Activated naive CD4-positive, alpha-beta T cell treated with anti-CD3 and anti-CD28 coated beads for 36 hours (primary cell): ENCODE measurements at regions of chr13 and their contacts with region 1.

Region 1: DNA sequence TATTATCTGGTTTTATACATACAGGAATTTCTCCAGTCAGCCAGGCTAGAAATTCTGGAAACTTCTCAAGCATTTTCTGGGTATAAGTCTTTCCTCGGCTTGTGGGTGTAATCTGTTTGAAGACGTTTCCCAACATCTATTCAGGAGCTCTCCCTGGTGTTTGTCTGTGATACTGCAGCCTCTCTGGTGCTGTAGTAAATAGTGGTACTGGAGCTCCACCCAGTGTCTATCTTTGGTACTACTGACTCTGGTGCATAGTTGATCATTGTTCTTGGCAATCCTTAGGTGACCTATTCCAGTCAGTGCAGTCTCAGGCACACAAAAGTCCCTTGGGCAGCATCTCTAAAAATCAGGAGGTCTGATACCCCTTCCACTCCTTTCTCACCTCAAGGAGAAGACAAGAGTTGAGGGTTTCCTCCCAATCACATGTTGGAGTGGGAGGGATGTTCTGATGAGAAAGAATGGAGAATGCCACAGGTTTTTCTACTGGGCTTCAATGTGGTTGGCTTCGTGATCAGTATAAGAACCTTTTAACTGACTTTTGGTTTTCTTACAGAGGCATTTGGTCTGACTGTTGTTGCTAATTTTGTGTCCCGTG is 115.5 kb downstream of the CYSLTR2 start:
- DNase-seq: peak; percentile 93
- H3K4me3 Mint-ChIP-seq: no peak overlapping the region
- H3K27ac Mint-ChIP-seq: no peak overlapping the region
- H3K4me1 Mint-ChIP-seq: peaks cover 15% of the 10 kb centered on the region
- H3K27me3 Mint-ChIP-seq: peaks cover 4% of the 10 kb centered on the region

Region 2: DNA sequence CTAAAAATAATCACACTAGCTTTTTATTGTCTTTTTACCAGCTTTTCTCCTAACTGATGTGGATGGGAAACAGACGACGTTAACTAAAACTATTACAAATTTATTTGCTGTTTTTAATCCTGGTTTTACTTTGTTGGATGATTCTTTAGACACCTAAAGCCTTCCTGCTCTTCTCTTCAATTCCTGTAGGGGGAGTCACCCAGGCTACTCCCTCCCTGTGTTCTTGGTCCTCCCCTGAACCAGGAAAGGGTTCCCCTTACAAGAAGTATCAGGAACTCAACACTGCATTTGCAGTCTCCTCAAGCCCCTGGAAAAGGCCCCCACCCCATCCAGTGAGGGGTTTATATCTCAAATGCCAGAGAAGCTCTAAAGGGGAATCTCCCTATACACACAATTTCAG is 974.2 kb before region 1 on chr13:
- CTCF ChIA-PET with region 1: no interaction called
- intact Hi-C with region 1: loop called (anchors 10 kb)
- DNase-seq: no peak
- H3K4me3 Mint-ChIP-seq: no peak overlapping the region
- H3K27ac Mint-ChIP-seq: no peak overlapping the region
- H3K4me1 Mint-ChIP-seq: no peaks in the 10 kb centered on the region
- H3K27me3 Mint-ChIP-seq: no peaks in the 10 kb centered on the region

Region 3: GRCh38 chr13:48126944-48127830 is 642.0 kb before region 1 on chr13:
- CTCF ChIA-PET with region 1: interaction called, 4 read pairs
- intact Hi-C with region 1: loop called (anchors 1 kb)
- DNase-seq: peak; percentile 46
- H3K4me3 Mint-ChIP-seq: peak overlapping the region; percentile 0
- H3K27ac Mint-ChIP-seq: peak overlapping the region; percentile 44
- H3K4me1 Mint-ChIP-seq: peaks cover 29% of the 10 kb centered on the region
- H3K27me3 Mint-ChIP-seq: no peaks in the 10 kb centered on the region

Region 4: DNA sequence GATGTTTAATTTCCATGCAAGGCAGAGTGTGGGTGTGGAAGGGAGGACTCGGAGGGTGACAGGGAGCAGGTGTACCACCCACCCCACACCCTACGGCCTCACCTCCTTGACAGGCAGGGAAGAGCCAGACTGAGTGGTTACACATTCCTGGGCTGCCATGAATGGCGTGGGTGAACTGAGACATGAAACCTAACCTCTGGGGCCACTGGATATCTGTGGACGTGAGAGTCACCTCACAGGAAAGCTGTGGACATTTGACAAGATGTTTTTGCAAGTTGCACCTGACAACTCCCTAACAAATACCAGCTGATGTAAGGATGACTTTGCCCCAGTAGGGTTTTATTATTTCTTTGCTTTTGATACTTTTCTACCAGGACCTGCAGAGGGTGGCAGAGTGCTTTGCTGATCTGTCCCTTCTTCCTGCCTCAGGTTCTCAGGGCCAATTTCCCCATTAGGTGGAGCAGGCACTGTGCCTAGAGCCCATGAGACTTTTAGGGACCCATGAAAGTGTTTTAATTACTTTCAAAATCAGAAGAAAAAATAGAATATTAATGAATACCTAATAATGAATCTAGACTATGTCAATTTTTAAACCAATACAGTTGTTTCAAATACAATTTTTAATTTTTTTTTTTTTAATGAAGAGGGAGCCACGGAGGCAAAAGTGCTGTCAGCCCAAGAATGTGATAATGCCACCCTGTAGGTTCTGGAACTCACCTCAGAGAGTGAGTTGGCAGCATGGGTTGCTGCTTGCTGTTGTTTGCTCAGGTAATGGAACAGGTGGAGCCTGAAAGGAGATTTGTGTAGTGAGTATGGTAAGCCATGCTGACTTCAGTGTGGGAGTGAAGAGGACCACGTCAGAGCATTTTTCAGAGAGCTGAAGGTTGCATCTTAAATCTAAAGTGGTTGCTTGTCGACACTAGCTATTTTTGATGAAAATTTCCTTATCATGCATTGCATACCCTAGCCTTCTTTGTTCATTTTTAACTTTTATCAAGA is 173.5 kb before region 1 on chr13:
- CTCF ChIA-PET with region 1: interaction called, 88 read pairs
- intact Hi-C with region 1: loop called (anchors 1 kb)
- DNase-seq: peak; percentile 75
- H3K4me3 Mint-ChIP-seq: no peak overlapping the region
- H3K27ac Mint-ChIP-seq: no peak overlapping the region
- H3K4me1 Mint-ChIP-seq: peaks cover 4% of the 10 kb centered on the region
- H3K27me3 Mint-ChIP-seq: no peaks in the 10 kb centered on the region

Region 5: GRCh38 chr13:48653472-48653939 is 115.7 kb before region 1 on chr13 and contains the start of gene CYSLTR2:
- CTCF ChIA-PET with region 1: interaction called, 4 read pairs
- intact Hi-C with region 1: loop called (anchors 2 kb)
- DNase-seq: peak; percentile 27
- H3K4me3 Mint-ChIP-seq: peak within 1 kb of the TSS; percentile 75
- H3K27ac Mint-ChIP-seq: peak within 1 kb of the TSS; percentile 82
- H3K4me1 Mint-ChIP-seq: peaks cover 29% of the 10 kb centered on the region
- H3K27me3 Mint-ChIP-seq: no peaks in the 10 kb centered on the region
- total RNA-seq, gene CYSLTR2: 1.3 to 1.7 TPM

Region 6: GRCh38 chr13:48902368-48902767 is 133.2 kb after region 1 on chr13:
- CTCF ChIA-PET with region 1: no interaction called
- intact Hi-C with region 1: no loop called
- DNase-seq: no peak
- H3K4me3 Mint-ChIP-seq: no peak overlapping the region
- H3K27ac Mint-ChIP-seq: no peak overlapping the region
- H3K4me1 Mint-ChIP-seq: peaks cover 4% of the 10 kb centered on the region
- H3K27me3 Mint-ChIP-seq: peaks cover 24% of the 10 kb centered on the region

Region 7: GRCh38 chr13:49278211-49278610 is 509.0 kb after region 1 on chr13:
- CTCF ChIA-PET with region 1: no interaction called
- intact Hi-C with region 1: loop called (anchors 1 kb)
- DNase-seq: no peak
- H3K4me3 Mint-ChIP-seq: no peak overlapping the region
- H3K27ac Mint-ChIP-seq: no peak overlapping the region
- H3K4me1 Mint-ChIP-seq: no peaks in the 10 kb centered on the region
- H3K27me3 Mint-ChIP-seq: no peaks in the 10 kb centered on the region